GM13977 (cell line): ENCODE measurements at regions of chr4 and their contacts with region 1.

Region 1: DNA sequence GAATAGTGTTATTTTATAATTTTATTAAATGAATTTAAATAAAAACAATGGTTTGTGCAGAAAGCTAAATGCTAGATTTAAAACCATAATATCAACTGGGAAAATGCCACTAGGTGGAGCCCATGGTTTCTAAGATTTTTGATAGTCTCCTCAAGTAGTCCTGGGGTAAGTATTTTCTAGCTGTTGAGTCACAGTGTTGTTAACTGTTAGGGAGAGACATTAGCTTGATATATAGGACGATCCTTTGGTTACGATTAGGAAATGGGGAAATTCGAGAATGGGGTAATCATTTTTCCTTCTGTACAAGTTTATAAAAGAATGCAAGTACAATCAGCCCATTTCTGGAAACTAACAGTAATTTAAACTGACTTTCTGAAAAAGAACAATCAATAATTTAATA is 378.4 kb downstream of the ANKRD50 start:
- DNase-seq: no peak
- CTCF ChIP-seq: peak; percentile 42

Region 2: GRCh38 chr4:124483115-124483898 is 149.2 kb after region 1 on chr4:
- in situ Hi-C with region 1: no loop called
- DNase-seq: no peak
- CTCF ChIP-seq: no peak

Region 3: DNA sequence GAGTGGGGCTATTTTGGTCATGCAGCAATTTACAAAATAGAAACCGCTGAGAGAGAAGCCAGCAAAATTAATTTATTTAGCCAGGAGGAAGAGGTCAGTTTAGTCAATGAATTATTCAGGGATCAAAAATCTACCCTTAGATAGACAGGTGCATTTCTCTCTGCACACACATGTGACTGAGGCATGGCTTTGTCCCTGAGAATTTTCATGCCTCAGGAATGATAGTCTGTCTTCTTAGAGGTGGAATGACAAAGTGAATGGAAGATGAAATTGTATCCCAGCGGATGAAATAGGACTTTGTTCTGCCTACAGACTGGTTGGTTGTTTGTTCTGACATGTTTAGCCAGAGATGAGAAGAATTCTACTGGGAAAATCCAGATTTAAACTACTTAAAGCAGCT is 332.4 kb after region 1 on chr4:
- in situ Hi-C with region 1: no loop called
- DNase-seq: no peak
- CTCF ChIP-seq: no peak

Region 4: DNA sequence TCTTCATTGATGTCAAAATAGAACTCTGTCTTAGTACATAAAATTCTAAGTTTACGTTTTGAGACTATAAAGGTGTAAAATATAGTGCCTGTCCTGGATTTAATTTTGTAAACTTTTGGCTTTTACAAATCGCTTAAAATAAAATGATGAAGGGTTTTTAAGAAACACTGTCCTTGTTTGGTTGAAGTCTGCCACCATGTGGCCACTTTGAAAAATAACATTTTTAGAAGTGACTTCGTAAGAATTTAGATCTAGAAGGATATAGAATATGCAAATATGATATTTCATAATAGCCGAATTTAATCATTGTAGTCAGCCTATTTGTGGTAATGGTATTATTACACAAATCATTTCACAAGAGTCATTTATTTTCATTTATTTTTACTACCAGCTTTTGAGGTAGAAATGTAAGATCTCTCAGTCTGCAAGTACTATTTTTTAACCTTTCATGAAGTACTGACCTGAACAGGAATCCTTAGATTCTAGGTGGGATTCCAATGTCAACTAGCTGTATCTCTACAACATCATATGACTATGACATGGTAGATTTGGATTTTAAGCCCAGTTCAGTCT is 949.7 kb after region 1 on chr4:
- in situ Hi-C with region 1: loop called (anchors 25 kb)
- DNase-seq: peak; percentile 17
- CTCF ChIP-seq: peak; percentile 50